ENCODE measurements at regions of chr6 and their contacts with region 1.

Region 1: GRCh38 chr6:110179401-110180227 is at the start of gene WASF1:
- DNase-seq: peak; percentile 97
- H3K4me3 Mint-ChIP-seq: peak within 1 kb of the TSS; percentile 81
- H3K27ac Mint-ChIP-seq: peak within 1 kb of the TSS; percentile 60
- H3K4me1 Mint-ChIP-seq: peaks cover 5% of the 10 kb centered on the region
- H3K27me3 Mint-ChIP-seq: peaks cover 19% of the 10 kb centered on the region
- total RNA-seq, gene WASF1: 1.2 and 2.2 TPM in 2 replicates

Region 2: GRCh38 chr6:109095027-109095834 is 1084.4 kb before region 1 on chr6 and contains the start of gene CEP57L1:
- intact Hi-C with region 1: loop called (anchors 1 kb)
- DNase-seq: peak; percentile 98
- H3K4me3 Mint-ChIP-seq: peak within 1 kb of the TSS; percentile 90
- H3K27ac Mint-ChIP-seq: peak within 1 kb of the TSS; percentile 100
- H3K4me1 Mint-ChIP-seq: peaks cover 53% of the 10 kb centered on the region
- H3K27me3 Mint-ChIP-seq: no peaks in the 10 kb centered on the region
- total RNA-seq, gene CEP57L1: 14.2 and 15.3 TPM in 2 replicates

Region 3: DNA sequence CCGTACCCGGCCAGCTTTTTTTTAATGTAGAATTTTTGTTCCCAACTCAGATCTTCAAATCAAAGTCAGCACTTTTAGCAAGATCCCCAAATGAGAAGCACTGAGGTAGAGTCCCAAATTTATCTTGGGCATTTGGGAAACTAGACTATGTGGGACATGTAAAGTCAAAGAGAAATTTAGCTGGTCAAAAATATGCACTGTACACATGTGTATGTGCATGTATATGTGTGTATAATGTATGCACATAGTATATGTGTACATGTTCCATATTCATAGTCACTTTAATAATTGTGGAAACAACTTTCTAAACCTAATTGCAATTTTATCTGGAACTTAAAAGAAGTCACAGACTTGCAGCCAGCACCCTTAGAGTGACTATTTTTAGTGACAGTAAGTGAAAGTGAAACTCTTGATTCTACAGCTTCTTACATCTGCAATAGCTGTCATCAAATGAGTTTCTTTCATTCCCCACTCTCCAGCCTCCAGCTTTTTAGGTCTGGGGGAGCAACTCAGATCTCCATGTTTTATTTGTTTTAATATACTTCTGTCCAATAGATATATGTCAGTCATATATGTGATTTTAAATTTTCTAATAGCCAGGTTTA is 54.3 kb after region 1 on chr6:
- intact Hi-C with region 1: loop called (anchors 5 kb)
- DNase-seq: peak; percentile 62
- H3K4me3 Mint-ChIP-seq: no peak overlapping the region
- H3K27ac Mint-ChIP-seq: no peak overlapping the region
- H3K4me1 Mint-ChIP-seq: peaks cover 2% of the 10 kb centered on the region
- H3K27me3 Mint-ChIP-seq: no peaks in the 10 kb centered on the region